ENCODE measurements at regions of chr10 and their contacts with region 1.

Region 1: GRCh38 chr10:96765406-96766240 is 45.3 kb upstream of the PIK3AP1 start:
- DNase-seq: peak; percentile 86
- H3K4me3 ChIP-seq: no peak overlapping the region
- H3K27ac ChIP-seq: peak overlapping the region; percentile 44 to 79 (median 66)
- H3K4me1 ChIP-seq: peaks cover 3 to 14% (median 13%) of the 10 kb centered on the region in 4 donors
- H3K27me3 ChIP-seq: no peaks in the 10 kb centered on the region
- CTCF ChIP-seq: peak; percentile 85 to 93 (median 89)
- EP300 ChIP-seq: no peak
- POLR2A ChIP-seq: no peak

Region 2: DNA sequence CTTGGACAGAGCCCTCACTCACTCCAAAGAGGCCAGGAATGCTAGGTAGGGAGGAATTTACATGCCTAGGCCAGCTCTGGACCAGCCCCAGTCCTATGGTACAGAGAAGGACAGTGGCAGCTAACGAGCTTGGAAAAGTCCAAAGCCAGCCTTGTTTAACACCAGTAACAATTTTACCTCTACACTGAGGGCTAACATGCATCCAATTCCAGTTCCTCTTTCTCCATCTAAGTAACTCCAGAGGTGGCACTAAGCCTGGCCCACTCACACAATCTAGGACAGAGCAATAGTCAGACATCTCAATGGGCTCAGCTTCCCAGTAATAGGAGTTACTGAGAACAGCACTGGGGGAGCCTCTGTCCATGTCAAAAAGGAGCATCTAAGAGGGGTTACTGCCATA is 60.8 kb after region 1 on chr10:
- in situ Hi-C with region 1: loop called in 2 of 4 experiments (anchors 5 to 10 kb)
- intact Hi-C with region 1: no loop called
- DNase-seq: no peak
- H3K4me3 ChIP-seq: no peak overlapping the region
- H3K27ac ChIP-seq: no peak overlapping the region
- H3K4me1 ChIP-seq: peaks cover 0 to 11% (median 8%) of the 10 kb centered on the region in 4 donors
- H3K27me3 ChIP-seq: no peaks in the 10 kb centered on the region
- CTCF ChIP-seq: no peak
- EP300 ChIP-seq: no peak
- POLR2A ChIP-seq: no peak